Sigmoid colon (tissue), 7 donors: ENCODE measurements at regions of chr7 and their contacts with region 1.

Region 1: DNA sequence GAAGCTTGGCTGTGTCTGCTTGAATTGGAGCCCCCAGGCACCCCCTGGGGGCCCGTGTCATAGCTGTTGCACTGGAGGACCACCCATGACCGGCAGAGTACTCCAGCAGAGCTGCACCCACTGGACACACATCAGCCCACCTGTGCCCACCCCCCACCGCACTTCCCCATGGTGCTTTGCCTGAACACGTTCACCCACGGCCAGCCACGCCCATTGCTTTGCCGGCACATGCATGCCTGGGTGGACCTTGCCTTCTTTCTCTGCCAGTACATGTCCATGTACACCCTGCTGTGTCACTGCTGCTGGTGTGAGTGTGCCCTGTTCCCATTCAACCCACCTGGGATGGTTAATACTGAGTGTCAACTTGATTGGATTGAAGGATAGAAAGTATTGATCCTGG is 88.7 kb downstream of the SAMD9 start:
- DNase-seq: no peak
- H3K4me3 ChIP-seq: no peak overlapping the region
- H3K27ac ChIP-seq: no peak overlapping the region
- H3K4me1 ChIP-seq: no peaks in the 10 kb centered on the region
- H3K27me3 ChIP-seq: no peaks in the 10 kb centered on the region
- CTCF ChIP-seq: no peak
- EP300 ChIP-seq: no peak
- POLR2A ChIP-seq: no peak

Region 2: DNA sequence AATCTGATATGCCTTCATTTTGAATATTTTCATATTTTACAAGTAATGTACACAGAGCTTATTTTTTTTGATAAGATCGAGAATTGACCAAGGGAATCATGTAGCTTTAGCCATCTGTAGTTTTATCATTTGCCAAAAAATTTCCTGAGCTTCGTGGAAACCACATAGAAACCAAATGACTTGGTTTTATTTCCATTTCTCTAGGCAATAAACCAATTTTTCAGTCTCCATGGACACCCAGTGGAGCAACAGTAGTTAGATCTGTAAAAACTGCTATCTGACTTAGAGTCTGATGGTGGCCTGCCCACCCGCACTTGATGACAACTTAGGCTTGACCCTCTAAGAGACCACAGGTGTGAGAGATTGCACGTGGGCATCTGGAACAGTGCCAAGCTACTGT is 64.9 kb before region 1 on chr7:
- intact Hi-C with region 1: no loop called
- DNase-seq: no peak
- H3K4me3 ChIP-seq: no peak overlapping the region
- H3K27ac ChIP-seq: no peak overlapping the region
- H3K4me1 ChIP-seq: no peaks in the 10 kb centered on the region
- H3K27me3 ChIP-seq: no peaks in the 10 kb centered on the region
- CTCF ChIP-seq: no peak
- EP300 ChIP-seq: no peak
- POLR2A ChIP-seq: no peak

Region 3: GRCh38 chr7:94129443-94130140 is 1100.5 kb after region 1 on chr7:
- intact Hi-C with region 1: loop called (anchors 5 kb)
- DNase-seq: no peak
- H3K4me3 ChIP-seq: no peak overlapping the region
- H3K27ac ChIP-seq: no peak overlapping the region
- H3K4me1 ChIP-seq: peaks cover 0 to 7% (median 3%) of the 10 kb centered on the region in 4 donors
- H3K27me3 ChIP-seq: no peaks in the 10 kb centered on the region
- CTCF ChIP-seq: no peak
- EP300 ChIP-seq: no peak
- POLR2A ChIP-seq: no peak